ENCODE measurements at regions of chr6 and their contacts with region 1.

Region 1: DNA sequence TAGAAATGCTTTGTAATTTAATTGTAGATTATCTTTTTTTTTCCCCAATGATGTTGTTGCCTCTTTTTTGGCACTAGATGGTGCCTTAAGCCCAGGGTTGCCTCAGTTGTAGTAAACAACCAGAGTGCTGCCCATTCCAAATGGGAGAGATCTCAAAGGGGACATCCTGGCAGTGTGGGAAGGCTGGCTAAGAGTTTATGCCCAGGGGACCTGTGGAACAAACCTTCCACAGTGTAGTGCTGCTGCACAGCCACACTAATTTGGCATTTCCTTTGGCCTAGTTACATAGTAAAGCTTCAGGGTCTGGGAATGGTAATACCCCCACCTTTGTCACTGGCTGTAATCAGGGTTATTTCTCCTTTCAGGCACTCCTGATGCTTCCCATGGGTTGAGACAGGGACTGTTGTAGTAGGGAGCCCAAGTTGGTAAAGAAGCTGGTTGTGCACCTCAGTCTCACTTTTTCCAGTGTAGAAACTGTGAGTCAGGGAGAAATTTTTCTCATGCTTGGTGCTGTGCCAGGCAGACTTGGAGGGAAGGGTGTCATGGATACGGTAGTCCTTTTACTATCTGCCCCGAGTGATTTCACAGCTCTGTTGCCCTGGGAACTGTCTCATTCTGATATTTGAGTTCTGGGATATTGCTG is 177.8 kb upstream of the ECI2 start:
- DNase-seq: peak; percentile 95
- H3K4me3 ChIP-seq: peak overlapping the region in 1 of 3 experiments; percentile 18
- H3K27ac ChIP-seq: peak overlapping the region; percentile 96
- H3K4me1 ChIP-seq: peaks cover 18% of the 10 kb centered on the region
- H3K27me3 ChIP-seq: no peaks in the 10 kb centered on the region
- CTCF ChIP-seq: peak; percentile 60 to 71

Region 2: GRCh38 chr6:3557336-3557735 is 755.8 kb before region 1 on chr6:
- CTCF ChIA-PET with region 1: no interaction called
- dilution Hi-C with region 1: no loop called
- in situ Hi-C with region 1: no loop called
- intact Hi-C with region 1: no loop called
- DNase-seq: no peak
- H3K4me3 ChIP-seq: no peak overlapping the region
- H3K27ac ChIP-seq: no peak overlapping the region
- H3K4me1 ChIP-seq: no peaks in the 10 kb centered on the region
- H3K27me3 ChIP-seq: no peaks in the 10 kb centered on the region
- CTCF ChIP-seq: no peak

Region 3: DNA sequence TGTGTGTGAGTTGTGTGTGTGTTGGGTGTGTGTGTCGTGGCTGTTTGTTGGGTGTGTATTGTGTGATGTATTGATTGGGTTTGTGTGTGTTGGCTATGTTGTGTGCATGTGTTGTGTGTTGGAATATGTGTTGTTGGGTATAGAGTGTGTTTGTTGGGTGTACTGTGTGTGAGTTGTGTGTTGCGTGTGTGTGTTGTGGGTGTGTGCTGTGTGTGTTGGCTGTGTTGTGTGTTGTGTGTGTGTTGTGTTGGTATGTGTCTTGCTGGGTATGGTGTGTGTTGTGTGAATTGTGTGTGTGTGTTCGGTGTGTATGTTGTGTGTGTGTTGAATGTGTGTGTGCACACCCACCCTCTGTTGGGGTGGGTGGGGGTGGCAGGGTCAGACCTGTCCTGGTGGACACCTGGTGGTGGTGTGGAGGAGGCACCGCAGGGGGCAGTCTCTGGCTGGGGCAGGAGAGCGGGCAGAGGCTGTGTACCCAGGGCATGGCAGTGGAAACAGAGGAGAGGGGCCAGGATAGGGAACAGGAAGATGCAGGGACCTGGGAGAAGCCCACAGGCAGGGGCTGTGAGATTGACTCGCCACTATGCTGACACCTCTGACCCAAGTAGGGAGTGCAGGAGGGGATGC is 536.2 kb before region 1 on chr6:
- CTCF ChIA-PET with region 1: no interaction called
- dilution Hi-C with region 1: no loop called
- in situ Hi-C with region 1: no loop called
- intact Hi-C with region 1: no loop called
- DNase-seq: no peak
- H3K4me3 ChIP-seq: no peak overlapping the region
- H3K27ac ChIP-seq: no peak overlapping the region
- H3K4me1 ChIP-seq: peaks cover 12% of the 10 kb centered on the region
- H3K27me3 ChIP-seq: no peaks in the 10 kb centered on the region
- CTCF ChIP-seq: peak in 1 of 2 donors; percentile 17

Region 4: DNA sequence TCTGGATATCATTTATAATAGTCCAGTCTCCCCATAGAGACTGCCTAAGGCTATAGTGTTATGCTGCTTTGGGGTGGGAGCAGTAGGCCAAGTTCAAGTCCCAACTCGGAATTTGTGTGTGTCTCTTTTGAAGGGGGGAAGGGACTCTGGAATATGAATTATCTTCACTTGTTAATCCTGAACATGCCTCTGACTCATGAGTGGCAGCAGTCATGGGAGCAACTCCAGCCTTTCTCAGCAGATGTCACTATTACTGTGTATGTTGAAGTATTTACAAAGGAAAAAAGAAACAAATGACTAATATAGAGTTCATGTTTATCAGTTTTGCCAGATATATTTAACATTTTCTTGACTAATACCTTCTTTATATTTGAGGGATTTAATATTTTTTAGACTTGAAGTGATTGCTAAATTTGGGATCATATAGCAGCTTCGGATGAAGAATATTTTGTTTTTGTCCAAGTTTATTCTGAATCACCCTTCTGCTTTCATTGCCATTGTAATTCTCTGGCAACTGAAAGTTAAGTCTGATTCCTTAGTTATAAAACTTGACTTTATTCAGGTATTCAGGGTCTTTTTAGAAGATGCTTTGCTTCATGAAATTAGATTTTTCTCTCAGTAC is 257.6 kb before region 1 on chr6:
- CTCF ChIA-PET with region 1: no interaction called
- dilution Hi-C with region 1: no loop called
- in situ Hi-C with region 1: no loop called
- intact Hi-C with region 1: loop called (anchors 1 kb)
- DNase-seq: peak; percentile 73
- H3K4me3 ChIP-seq: no peak overlapping the region
- H3K27ac ChIP-seq: peak overlapping the region; percentile 37
- H3K4me1 ChIP-seq: peaks cover 39% of the 10 kb centered on the region
- H3K27me3 ChIP-seq: no peaks in the 10 kb centered on the region
- CTCF ChIP-seq: peak; percentile 52 to 67

Region 5: DNA sequence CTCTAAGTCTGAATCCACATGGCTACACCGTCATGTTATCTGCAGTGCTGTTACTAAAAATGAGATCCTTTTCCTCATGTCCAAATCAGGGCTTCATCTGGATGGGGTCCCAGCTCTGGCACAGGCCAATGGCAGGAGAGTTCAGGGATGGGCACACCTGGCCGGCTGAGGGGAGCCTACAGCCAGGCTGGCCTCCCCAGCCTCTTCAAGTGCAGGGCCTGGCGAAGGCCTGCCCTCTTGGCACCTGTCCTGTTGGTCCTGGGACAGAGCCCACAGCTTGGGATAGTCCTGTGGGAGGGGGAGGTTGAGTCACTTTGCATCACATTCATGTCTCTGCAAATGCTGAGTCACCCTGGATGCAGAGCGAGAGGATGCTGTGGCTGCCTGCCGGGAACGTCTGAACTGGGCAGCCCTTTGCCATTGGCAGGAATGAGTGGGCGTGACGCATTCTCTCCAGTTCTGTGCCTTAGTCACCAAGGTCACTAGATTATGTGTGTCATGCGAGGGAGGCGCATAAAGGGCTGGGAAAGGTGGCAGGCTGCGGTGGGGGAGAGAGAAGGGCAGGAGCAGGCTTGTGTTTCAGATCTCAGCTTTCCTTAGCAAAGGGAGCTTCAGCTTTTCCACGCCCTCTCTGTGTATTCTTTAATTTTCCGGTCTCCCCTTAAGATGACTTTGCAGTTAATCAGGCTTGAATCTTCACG is 45.4 kb after region 1 on chr6:
- CTCF ChIA-PET with region 1: no interaction called
- dilution Hi-C with region 1: loop called (anchors 5 kb)
- in situ Hi-C with region 1: no loop called
- intact Hi-C with region 1: loop called (anchors 2 kb)
- DNase-seq: peak; percentile 100
- H3K4me3 ChIP-seq: peak overlapping the region in 1 of 3 experiments; percentile 6
- H3K27ac ChIP-seq: peak overlapping the region; percentile 92
- H3K4me1 ChIP-seq: peaks cover 39% of the 10 kb centered on the region
- H3K27me3 ChIP-seq: no peaks in the 10 kb centered on the region
- CTCF ChIP-seq: no peak

Region 6: GRCh38 chr6:4732691-4733315 is 419.6 kb after region 1 on chr6:
- CTCF ChIA-PET with region 1: no interaction called
- dilution Hi-C with region 1: no loop called
- in situ Hi-C with region 1: no loop called
- intact Hi-C with region 1: loop called (anchors 1 kb)
- DNase-seq: peak; percentile 95
- H3K4me3 ChIP-seq: peak overlapping the region; percentile 21 to 47 (median 32)
- H3K27ac ChIP-seq: peak overlapping the region; percentile 79
- H3K4me1 ChIP-seq: peaks cover 23% of the 10 kb centered on the region
- H3K27me3 ChIP-seq: no peaks in the 10 kb centered on the region
- CTCF ChIP-seq: no peak

Region 7: DNA sequence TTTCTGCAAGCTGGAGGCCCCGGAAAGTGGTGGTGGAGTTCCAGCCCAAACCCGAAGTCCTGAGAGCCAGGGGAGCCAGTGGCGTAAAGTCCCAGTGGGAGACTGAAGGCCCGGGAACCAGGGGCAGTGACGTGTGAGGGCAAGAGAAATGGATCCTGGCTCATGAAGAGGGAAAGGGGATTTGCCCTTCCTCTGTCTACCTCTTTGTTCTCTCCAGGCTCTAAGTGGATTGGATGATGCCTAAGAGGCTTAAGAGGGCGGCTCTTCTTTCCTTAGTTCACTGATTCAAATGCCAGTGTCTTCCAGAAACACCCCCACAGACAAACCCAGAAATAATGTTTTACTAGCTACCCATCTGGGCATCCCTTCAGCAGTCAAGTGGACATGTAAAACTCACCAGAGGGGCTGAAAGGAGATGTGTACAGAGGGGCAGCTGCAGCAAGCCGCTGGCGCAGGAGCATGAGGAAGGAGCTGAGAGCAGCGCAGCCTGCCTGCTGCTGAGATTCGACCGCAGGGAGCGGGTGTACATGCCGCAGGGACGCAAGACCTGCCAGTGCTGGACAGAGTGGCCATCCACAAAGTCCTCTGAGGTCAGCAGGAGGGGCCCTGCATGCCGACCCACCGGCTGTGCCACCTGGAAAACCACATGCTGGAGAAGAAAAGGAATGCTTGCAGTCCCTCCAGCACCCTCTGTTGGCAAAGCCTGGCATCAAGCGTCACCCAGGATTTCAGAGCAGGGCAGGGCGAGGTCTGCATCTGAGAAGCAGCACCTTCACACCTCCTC is 492.6 kb after region 1 on chr6:
- CTCF ChIA-PET with region 1: no interaction called
- dilution Hi-C with region 1: no loop called
- in situ Hi-C with region 1: no loop called
- intact Hi-C with region 1: loop called (anchors 1 kb)
- DNase-seq: peak; percentile 40
- H3K4me3 ChIP-seq: no peak overlapping the region
- H3K27ac ChIP-seq: peak overlapping the region; percentile 50
- H3K4me1 ChIP-seq: peaks cover 43% of the 10 kb centered on the region
- H3K27me3 ChIP-seq: no peaks in the 10 kb centered on the region
- CTCF ChIP-seq: peak; percentile 76 to 88

Region 8: GRCh38 chr6:5030596-5031136 is 717.5 kb after region 1 on chr6:
- CTCF ChIA-PET with region 1: no interaction called
- dilution Hi-C with region 1: no loop called
- in situ Hi-C with region 1: no loop called
- intact Hi-C with region 1: loop called (anchors 1 kb)
- DNase-seq: peak; percentile 38
- H3K4me3 ChIP-seq: no peak overlapping the region
- H3K27ac ChIP-seq: no peak overlapping the region
- H3K4me1 ChIP-seq: peaks cover 15% of the 10 kb centered on the region
- H3K27me3 ChIP-seq: no peaks in the 10 kb centered on the region
- CTCF ChIP-seq: peak; percentile 56 to 58

Region 9: DNA sequence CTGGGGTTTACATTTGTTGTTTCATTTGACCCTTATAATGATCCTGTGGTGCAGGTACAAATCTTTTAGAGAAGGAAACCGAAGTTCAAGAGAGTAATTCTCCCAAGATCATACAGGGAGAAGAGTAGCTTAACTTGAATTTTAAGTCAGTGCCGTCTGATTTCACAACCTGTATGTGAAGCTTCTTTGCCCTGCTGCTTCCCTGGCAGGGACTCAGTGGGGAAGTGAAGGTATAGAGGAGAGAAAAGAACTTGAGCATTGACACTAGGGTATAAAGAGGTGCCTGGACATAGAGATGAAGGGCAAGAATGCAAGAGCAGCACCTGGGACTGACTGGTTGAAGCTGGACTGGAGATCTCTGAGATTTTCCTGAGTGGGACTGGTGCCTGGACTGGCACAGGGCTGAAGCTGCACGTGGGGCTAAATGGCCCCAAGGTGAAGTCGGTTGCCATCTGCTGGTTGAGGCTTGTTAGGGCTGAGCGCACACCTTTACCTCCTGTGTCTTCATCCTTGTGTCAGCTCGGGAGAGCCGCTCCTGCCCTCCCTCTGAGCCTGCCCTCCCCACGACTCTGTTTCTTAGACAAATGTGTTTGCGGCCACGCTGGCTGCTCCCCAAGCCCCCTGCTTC is 989.9 kb after region 1 on chr6:
- CTCF ChIA-PET with region 1: no interaction called
- dilution Hi-C with region 1: no loop called
- in situ Hi-C with region 1: no loop called
- intact Hi-C with region 1: loop called (anchors 1 kb)
- DNase-seq: peak; percentile 77
- H3K4me3 ChIP-seq: no peak overlapping the region
- H3K27ac ChIP-seq: no peak overlapping the region
- H3K4me1 ChIP-seq: peaks cover 10% of the 10 kb centered on the region
- H3K27me3 ChIP-seq: no peaks in the 10 kb centered on the region
- CTCF ChIP-seq: peak; percentile 87 to 93

Measured in mammary epithelial cell (primary cell).